Adrenal gland (tissue), 19 donors: ENCODE measurements at regions of chr5 and their contacts with region 1.

Region 1: DNA sequence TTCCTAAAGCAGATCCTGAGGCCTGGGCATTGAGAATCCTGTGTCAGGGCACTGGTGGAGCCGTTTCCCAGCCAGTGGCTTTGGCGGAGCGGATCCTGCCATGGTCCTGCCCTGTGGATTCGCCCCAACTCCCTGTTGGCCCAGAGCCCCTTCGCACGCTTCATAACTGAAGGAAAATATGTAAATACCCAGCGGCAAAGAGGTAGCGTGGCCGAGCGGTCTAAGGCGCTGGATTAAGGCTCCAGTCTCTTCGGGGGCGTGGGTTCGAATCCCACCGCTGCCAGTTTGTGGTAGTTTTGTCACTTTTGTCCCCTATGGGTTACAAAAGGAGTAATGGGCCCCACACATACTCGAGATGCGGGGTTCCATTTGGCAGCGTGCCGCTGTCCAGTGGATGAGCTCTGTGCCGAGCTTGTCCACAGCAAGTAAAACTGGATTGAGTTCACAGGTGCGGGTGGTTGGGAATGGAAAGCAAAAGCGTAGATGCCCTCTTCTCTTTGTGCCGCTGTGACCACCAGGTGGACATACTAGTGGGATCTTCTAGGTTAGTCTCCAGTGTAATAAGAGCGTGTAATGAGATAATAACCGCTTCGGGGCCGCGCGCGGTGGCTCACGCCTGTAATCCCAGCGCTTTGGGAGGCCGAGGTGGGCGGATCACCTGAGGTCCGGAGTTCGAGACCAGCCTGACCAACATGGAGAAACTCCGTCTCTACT is 17.3 kb downstream of the TRIM7 start:
- DNase-seq: peak; percentile 71 to 94 (median 76)
- H3K4me3 ChIP-seq: peak overlapping the region in 1 of 4 donors; percentile 82
- H3K27ac ChIP-seq: peak overlapping the region in 3 of 5 donors; percentile 53 to 75 (median 75)
- H3K4me1 ChIP-seq: peaks cover 22 to 25% of the 10 kb centered on the region in 2 donors
- H3K27me3 ChIP-seq: no peaks in the 10 kb centered on the region
- CTCF ChIP-seq: peak in 2 of 6 experiments; percentile 33 to 44
- POLR2A ChIP-seq: no peak

Region 2: DNA sequence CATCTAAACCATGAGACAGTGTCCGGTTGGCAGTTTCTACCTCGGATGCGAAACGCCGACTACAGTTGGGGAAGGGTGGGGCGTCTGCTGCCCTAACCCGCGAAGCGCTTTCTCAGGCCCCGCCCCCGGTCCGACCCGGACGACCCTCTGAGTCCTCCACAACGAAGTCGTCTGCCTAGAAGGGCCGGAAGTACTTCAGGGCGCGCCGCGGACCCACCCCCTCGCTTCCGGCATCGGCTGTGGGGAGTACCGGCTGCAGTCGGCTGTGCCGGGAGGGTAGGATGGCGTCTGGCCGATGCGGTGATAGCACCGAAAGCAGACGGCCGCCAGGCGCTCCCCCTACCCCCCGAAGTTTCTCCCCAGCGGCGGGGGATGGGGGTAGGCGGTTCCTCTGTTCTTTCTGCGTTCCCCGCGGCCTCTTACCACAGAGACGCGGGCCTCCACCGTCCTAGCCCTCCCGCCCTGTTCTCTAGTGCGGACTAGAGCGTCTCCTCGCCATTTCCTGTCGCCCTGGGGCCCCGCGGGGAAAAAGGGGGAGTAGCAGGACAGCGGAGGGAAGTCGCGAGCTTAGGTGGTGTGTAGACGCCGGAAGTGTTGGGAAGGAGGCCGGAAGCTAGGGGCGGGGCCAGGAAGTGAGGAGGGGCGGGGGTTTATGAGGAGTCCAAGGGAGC is 35.5 kb after region 1 on chr5 and contains the start of gene TRIM41:
- intact Hi-C with region 1: loop called (anchors 2 to 5 kb)
- DNase-seq: peak; percentile 94 to 99 (median 98)
- H3K4me3 ChIP-seq: peak within 1 kb of the TSS; percentile 46 to 87 (median 72)
- H3K27ac ChIP-seq: peak within 1 kb of the TSS; percentile 74 to 98 (median 95)
- H3K4me1 ChIP-seq: peaks cover 4 to 19% of the 10 kb centered on the region in 2 donors
- H3K27me3 ChIP-seq: no peaks in the 10 kb centered on the region
- CTCF ChIP-seq: peak in 1 of 6 experiments; percentile 20
- POLR2A ChIP-seq: peak; percentile 81 to 84
- total RNA-seq, gene TRIM41: 15.6 to 41.6 (median 19.6) TPM

Region 3: GRCh38 chr5:181260387-181261319 is 73.0 kb after region 1 on chr5 and contains the start of gene TRIM52:
- intact Hi-C with region 1: loop called in 1 of 2 experiments (anchors 5 kb)
- DNase-seq: peak; percentile 89 to 94 (median 90)
- H3K4me3 ChIP-seq: peak within 1 kb of the TSS; percentile 90 to 99 (median 92)
- H3K27ac ChIP-seq: peak within 1 kb of the TSS; percentile 97 to 100 (median 98)
- H3K4me1 ChIP-seq: peaks cover 24 to 51% of the 10 kb centered on the region in 2 donors
- H3K27me3 ChIP-seq: no peaks in the 10 kb centered on the region
- CTCF ChIP-seq: peak in 3 of 6 experiments; percentile 14 to 28 (median 16)
- POLR2A ChIP-seq: peak; percentile 86 to 91
- total RNA-seq, gene TRIM52: 7.8 to 19.1 (median 12.1) TPM